ENCODE measurements at regions of chr5 and their contacts with region 1.

Region 1: GRCh38 chr5:149288436-149288835 is 16.8 kb downstream of the AFAP1L1 start:
- DNase-seq: peak; percentile 70
- H3K4me3 ChIP-seq: no peak overlapping the region
- H3K27ac ChIP-seq: peak overlapping the region; percentile 86
- H3K4me1 ChIP-seq: peaks cover 27% of the 10 kb centered on the region
- H3K27me3 ChIP-seq: no peaks in the 10 kb centered on the region
- CTCF ChIP-seq: no peak
- POLR2A ChIP-seq: no peak

Region 2: GRCh38 chr5:149298842-149299404 is 10.5 kb after region 1 on chr5:
- CTCF ChIA-PET with region 1: interaction called, 8 read pairs
- POLR2A ChIA-PET with region 1: interaction called, 10 read pairs
- dilution Hi-C with region 1: no loop called
- intact Hi-C with region 1: loop called (anchors 1 kb)
- DNase-seq: peak; percentile 97
- H3K4me3 ChIP-seq: no peak overlapping the region
- H3K27ac ChIP-seq: peak overlapping the region; percentile 80
- H3K4me1 ChIP-seq: peaks cover 28% of the 10 kb centered on the region
- H3K27me3 ChIP-seq: no peaks in the 10 kb centered on the region
- CTCF ChIP-seq: no peak
- POLR2A ChIP-seq: peak; percentile 75

Region 3: GRCh38 chr5:149310947-149311658 is 22.7 kb after region 1 on chr5:
- CTCF ChIA-PET with region 1: interaction called, 7 read pairs
- POLR2A ChIA-PET with region 1: no interaction called
- dilution Hi-C with region 1: no loop called
- intact Hi-C with region 1: loop called (anchors 1 kb)
- DNase-seq: peak; percentile 78
- H3K4me3 ChIP-seq: no peak overlapping the region
- H3K27ac ChIP-seq: peak overlapping the region; percentile 77
- H3K4me1 ChIP-seq: peaks cover 23% of the 10 kb centered on the region
- H3K27me3 ChIP-seq: no peaks in the 10 kb centered on the region
- CTCF ChIP-seq: no peak
- POLR2A ChIP-seq: no peak

Region 4: GRCh38 chr5:149317281-149318048 is 29.0 kb after region 1 on chr5:
- CTCF ChIA-PET with region 1: interaction called, 11 read pairs
- POLR2A ChIA-PET with region 1: no interaction called
- dilution Hi-C with region 1: no loop called
- intact Hi-C with region 1: no loop called
- DNase-seq: peak; percentile 62
- H3K4me3 ChIP-seq: no peak overlapping the region
- H3K27ac ChIP-seq: no peak overlapping the region
- H3K4me1 ChIP-seq: peaks cover 22% of the 10 kb centered on the region
- H3K27me3 ChIP-seq: no peaks in the 10 kb centered on the region
- CTCF ChIP-seq: peak; percentile 51 to 64
- POLR2A ChIP-seq: no peak

Region 5: GRCh38 chr5:149333711-149334443 is 45.4 kb after region 1 on chr5:
- CTCF ChIA-PET with region 1: no interaction called
- POLR2A ChIA-PET with region 1: no interaction called
- dilution Hi-C with region 1: no loop called
- intact Hi-C with region 1: loop called (anchors 1 kb)
- DNase-seq: peak; percentile 79
- H3K4me3 ChIP-seq: no peak overlapping the region
- H3K27ac ChIP-seq: peak overlapping the region; percentile 68
- H3K4me1 ChIP-seq: peaks cover 20% of the 10 kb centered on the region
- H3K27me3 ChIP-seq: no peaks in the 10 kb centered on the region
- CTCF ChIP-seq: no peak
- POLR2A ChIP-seq: no peak

Region 6: GRCh38 chr5:149466457-149466972 is 178.1 kb after region 1 on chr5:
- CTCF ChIA-PET with region 1: no interaction called
- POLR2A ChIA-PET with region 1: no interaction called
- dilution Hi-C with region 1: no loop called
- intact Hi-C with region 1: no loop called
- DNase-seq: no peak
- H3K4me3 ChIP-seq: no peak overlapping the region
- H3K27ac ChIP-seq: no peak overlapping the region
- H3K4me1 ChIP-seq: peaks cover 23% of the 10 kb centered on the region
- H3K27me3 ChIP-seq: no peaks in the 10 kb centered on the region
- CTCF ChIP-seq: no peak
- POLR2A ChIP-seq: no peak